ENCODE measurements at regions of chr11 and their contacts with region 1.

Region 1: DNA sequence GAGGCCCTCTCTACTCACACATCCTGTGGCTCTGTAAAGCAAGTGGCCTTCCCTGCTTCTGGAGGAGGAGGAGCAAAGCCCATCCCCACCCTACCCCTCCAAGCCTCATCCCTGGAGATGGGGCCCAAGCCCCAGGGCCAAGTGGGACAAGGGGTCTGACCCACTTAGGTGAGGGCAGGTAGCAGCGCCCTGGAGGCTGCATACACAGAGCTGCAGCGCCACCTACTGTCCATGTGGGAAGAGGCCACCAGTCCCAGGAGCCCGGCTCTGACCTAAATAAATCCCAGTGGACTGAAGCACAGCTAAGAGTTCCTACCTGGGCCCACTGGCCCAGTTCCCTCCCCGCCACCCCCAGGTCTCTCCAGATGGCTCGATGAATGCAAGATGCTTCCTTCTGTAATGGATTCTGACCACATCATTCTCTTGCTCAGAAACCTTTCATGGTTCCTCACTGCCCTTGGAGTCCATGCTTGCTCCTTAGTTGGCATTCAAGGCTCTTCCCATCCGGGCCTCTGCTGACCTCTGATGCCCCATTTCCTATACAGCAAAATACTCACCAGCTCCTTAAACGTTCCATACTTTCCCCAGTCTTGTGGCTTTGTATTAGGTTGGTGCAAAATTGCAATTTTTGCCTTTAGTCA is 62.1 kb downstream of the THAP12 start:
- DNase-seq: peak; percentile 73 to 95
- H3K4me3 ChIP-seq: no peak overlapping the region
- CTCF ChIP-seq: peak in 1 of 3 donors; percentile 59
- POLR2A ChIP-seq: no peak

Region 2: GRCh38 chr11:75980031-75980430 is 338.8 kb before region 1 on chr11:
- intact Hi-C with region 1: no loop called
- DNase-seq: no peak
- H3K4me3 ChIP-seq: no peak overlapping the region
- CTCF ChIP-seq: no peak
- POLR2A ChIP-seq: no peak

Region 3: GRCh38 chr11:76207642-76208401 is 111.0 kb before region 1 on chr11:
- intact Hi-C with region 1: loop called (anchors 2 kb)
- DNase-seq: peak; percentile 63 to 96
- H3K4me3 ChIP-seq: peak overlapping the region; percentile 22
- CTCF ChIP-seq: peak in 1 of 3 donors; percentile 61
- POLR2A ChIP-seq: no peak

Measured in lower leg skin (tissue), 4 donors.